ENCODE measurements at regions of chr9 and their contacts with region 1.

Region 1: GRCh38 chr9:37753489-37754190 is at the start of gene TRMT10B:
- DNase-seq: peak; percentile 50 to 81 (median 63)
- H3K4me3 ChIP-seq: peak within 1 kb of the TSS; percentile 53 to 97 (median 86)
- H3K27ac ChIP-seq: peak within 1 kb of the TSS in 52 of 59 donors; percentile 7 to 89 (median 65)
- H3K27me3 ChIP-seq: no peaks in the 10 kb centered on the region
- CTCF ChIP-seq: peak in 30 of 56 donors; percentile 6 to 35 (median 19)
- total RNA-seq, gene TRMT10B: 7.8 to 20.2 (median 13.0) TPM

Region 2: DNA sequence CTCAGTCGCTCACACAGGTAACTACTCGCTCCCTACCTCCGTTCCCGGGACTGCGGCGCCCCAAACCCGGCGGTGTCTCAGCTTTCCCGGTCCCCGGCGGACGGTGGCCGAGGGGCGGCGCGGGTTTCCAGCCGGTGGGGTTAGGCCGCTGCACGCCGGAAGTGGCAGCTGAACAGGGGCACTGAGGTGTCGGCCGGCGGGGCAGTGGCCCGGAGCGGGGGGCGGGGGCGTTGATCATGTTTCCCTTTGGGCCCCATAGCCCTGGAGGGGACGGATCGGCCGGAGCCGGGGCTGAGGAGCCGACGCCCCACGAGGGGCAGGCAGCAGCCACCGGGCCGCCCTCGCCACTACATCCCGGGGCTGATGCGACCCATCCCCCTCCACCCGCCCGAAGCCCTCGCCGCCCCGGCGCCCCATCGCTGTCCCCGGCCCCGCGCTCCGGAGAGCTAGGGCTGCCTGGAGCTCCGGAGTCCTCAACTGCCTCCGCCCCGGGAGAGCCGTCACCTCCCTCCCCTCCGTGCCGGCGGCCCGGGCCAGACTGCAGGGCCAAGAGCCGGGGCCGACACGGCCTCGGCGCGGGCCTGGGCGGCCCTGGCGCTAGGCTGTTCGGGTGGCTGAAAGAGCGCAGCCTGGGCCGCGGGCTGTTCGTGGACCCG is 47.1 kb after region 1 on chr9 and contains the start of gene DCAF10:
- intact Hi-C with region 1: loop called in 1 of 2 experiments (anchors 5 kb)
- DNase-seq: peak; percentile 70 to 93 (median 84)
- H3K4me3 ChIP-seq: peak within 1 kb of the TSS; percentile 58 to 99 (median 93)
- H3K27ac ChIP-seq: peak within 1 kb of the TSS in 55 of 59 donors; percentile 43 to 91 (median 80)
- H3K27me3 ChIP-seq: no peaks in the 10 kb centered on the region
- CTCF ChIP-seq: peak in 41 of 56 donors; percentile 12 to 55 (median 33)
- total RNA-seq, gene DCAF10: 17.1 to 40.1 (median 27.8) TPM

Measured in dorsolateral prefrontal cortex (tissue), 120 donors.